IMR-90 (cell line): ENCODE measurements at regions of chr6 and their contacts with region 1.

Region 1: GRCh38 chr6:34602318-34603111 is 46.4 kb upstream of the SPDEF start:
- DNase-seq: peak; percentile 28
- ATAC-seq: peak; percentile 33; the same call in 1 of the 2 replicates
- H3K4me3 ChIP-seq: no peak overlapping the region
- H3K27ac ChIP-seq: no peak overlapping the region
- H3K4me1 ChIP-seq: peaks cover 10% of the 10 kb centered on the region
- H3K27me3 ChIP-seq: no peaks in the 10 kb centered on the region
- CTCF ChIP-seq: no peak
- POLR2A ChIP-seq: no peak
- RAD21 ChIP-seq: no peak

Region 2: DNA sequence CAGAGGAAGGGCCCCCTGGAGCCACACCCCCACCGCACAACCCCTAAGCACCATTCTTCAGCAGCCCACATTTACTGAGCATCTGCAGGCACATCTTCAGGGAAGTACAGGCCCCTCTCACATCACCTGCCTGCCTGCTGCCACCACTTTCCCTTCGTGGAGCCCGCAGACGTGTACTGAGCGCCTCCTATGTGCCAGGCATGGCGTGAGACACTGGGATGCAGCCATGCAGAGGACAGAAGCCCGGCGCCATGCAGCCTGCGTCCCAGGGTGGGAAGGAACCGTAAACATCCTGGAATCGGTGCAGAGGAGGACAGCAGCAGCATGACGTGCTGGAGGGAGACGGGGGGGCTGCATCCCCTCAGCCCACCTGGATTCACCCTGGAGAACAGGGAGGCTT is 534.7 kb before region 1 on chr6:
- CTCF ChIA-PET with region 1: no interaction called
- POLR2A ChIA-PET with region 1: no interaction called
- dilution Hi-C with region 1: no loop called
- in situ Hi-C with region 1: no loop called
- intact Hi-C with region 1: loop called (anchors 10 kb)
- DNase-seq: no peak
- ATAC-seq: no peak; the same call in 1 of the 2 replicates
- H3K4me3 ChIP-seq: no peak overlapping the region
- H3K27ac ChIP-seq: no peak overlapping the region
- H3K4me1 ChIP-seq: no peaks in the 10 kb centered on the region
- H3K27me3 ChIP-seq: peaks cover 49% of the 10 kb centered on the region
- CTCF ChIP-seq: 0 out of 2 replicates have a peak, but pooled peaks have one; percentile 11
- POLR2A ChIP-seq: no peak
- RAD21 ChIP-seq: no peak

Region 3: GRCh38 chr6:34169897-34170296 is 432.6 kb before region 1 on chr6:
- CTCF ChIA-PET with region 1: interaction called, 3 read pairs
- POLR2A ChIA-PET with region 1: no interaction called
- dilution Hi-C with region 1: no loop called
- in situ Hi-C with region 1: loop called (anchors 5 kb)
- intact Hi-C with region 1: no loop called
- DNase-seq: no peak
- ATAC-seq: no peak
- H3K4me3 ChIP-seq: no peak overlapping the region
- H3K27ac ChIP-seq: no peak overlapping the region
- H3K4me1 ChIP-seq: no peaks in the 10 kb centered on the region
- H3K27me3 ChIP-seq: peaks cover 7% of the 10 kb centered on the region
- CTCF ChIP-seq: no peak
- POLR2A ChIP-seq: no peak
- RAD21 ChIP-seq: no peak

Region 4: GRCh38 chr6:34630040-34630439 is 27.5 kb after region 1 on chr6:
- CTCF ChIA-PET with region 1: no interaction called
- POLR2A ChIA-PET with region 1: no interaction called
- dilution Hi-C with region 1: no loop called
- in situ Hi-C with region 1: no loop called
- intact Hi-C with region 1: no loop called
- DNase-seq: peak; percentile 98
- ATAC-seq: peak; percentile 93
- H3K4me3 ChIP-seq: no peak overlapping the region
- H3K27ac ChIP-seq: peak overlapping the region; percentile 76
- H3K4me1 ChIP-seq: peaks cover 5% of the 10 kb centered on the region; the same call in 1 of the 2 replicates
- H3K27me3 ChIP-seq: no peaks in the 10 kb centered on the region
- CTCF ChIP-seq: no peak
- POLR2A ChIP-seq: no peak
- RAD21 ChIP-seq: no peak